ENCODE measurements at regions of chr17 and their contacts with region 1.

Region 1: GRCh38 chr17:30378824-30379302 is at the start of gene CPD:
- DNase-seq: peak; percentile 97 to 99
- H3K4me3 ChIP-seq: peak within 1 kb of the TSS; percentile 78 to 80
- H3K27ac ChIP-seq: peak within 1 kb of the TSS; percentile 81 to 90
- H3K4me1 ChIP-seq: peaks cover 0 to 42% (median 18%) of the 10 kb centered on the region in 4 donors
- H3K27me3 ChIP-seq: no peaks in the 10 kb centered on the region
- CTCF ChIP-seq: no peak

Region 2: DNA sequence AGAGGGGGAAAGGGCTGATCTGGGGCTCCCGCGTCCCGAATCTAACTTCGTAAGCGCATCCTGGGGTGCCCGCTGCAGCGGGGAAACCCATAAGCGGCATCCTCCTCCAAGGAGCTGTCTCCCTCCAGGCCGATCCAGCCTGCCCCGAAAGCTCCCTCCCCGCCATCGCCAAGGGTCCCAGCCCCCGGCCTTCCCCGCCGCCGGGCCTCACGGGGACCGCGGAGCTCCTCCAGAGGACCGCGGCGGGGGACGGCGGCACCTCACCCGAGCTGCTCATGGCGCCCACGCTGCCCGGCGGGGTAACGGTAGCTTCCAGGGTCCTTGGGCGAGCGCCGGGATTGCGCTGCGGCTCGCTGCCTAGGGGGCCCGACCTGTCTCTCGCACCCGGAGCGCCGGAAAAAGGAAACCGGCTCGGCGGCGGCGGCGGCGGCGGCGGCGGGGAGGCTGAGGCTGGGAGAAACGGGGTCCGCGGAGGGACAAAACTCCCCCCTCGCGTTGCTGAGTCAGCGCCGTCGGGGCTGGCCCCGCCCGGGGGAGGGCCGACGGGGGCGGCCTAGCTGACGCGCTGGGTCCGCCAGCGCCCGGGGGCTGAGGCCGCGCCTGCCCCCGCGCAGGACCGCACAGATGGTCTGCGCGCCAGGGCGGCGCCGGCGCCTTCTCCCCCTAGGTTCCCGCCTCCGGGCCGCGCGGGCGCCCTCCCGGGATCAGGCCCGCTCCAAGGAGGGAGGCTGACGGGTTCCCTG is 87.1 kb before region 1 on chr17 and contains the start of gene BLMH:
- intact Hi-C with region 1: loop called (anchors 5 kb)
- DNase-seq: peak; percentile 72 to 89
- H3K4me3 ChIP-seq: peak within 1 kb of the TSS; percentile 84 to 89
- H3K27ac ChIP-seq: peak within 1 kb of the TSS; percentile 92 to 93
- H3K4me1 ChIP-seq: peaks cover 0 to 27% (median 12%) of the 10 kb centered on the region in 4 donors
- H3K27me3 ChIP-seq: no peaks in the 10 kb centered on the region
- CTCF ChIP-seq: no peak